Dorsolateral prefrontal cortex (tissue), 120 donors: ENCODE measurements at regions of chr14 and their contacts with region 1.

Region 1: DNA sequence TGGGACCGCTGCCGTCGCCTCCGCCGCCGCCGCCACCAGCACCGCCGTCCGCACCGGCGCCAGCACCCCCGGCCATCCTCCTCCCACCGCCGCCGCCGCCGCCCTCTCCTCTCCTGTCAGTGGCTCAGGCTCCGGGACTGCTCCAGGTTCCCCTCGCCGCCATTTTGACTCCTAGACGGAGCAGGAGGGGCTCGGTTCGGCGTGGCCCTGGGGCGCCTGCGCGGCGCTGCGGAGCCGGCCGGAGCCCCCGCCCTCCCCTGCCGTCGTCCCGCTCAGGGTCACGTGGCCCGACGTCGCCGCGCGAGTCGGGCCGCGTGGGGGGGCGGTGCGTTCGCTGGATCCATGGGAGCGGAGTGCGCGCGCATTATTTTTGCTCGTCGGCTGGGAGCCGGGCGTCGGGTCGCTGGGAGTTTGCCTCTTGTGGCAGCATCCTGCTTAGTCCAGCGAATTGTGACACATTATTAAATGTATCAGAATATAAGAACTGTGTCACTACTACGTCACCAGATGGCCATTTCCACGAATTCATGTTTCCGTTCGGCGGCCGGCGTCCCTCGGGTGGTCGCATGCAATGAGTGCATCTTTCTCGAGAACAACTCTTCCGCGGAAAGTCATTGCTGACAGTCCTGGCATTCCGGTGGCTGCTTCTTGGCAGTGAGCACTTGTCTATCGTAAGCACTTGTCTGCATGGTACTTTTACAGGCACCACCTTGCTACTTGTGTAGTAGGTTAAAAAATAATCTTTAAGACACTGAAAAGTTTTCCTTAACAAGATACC is at the start of gene BTBD7:
- DNase-seq: peak; percentile 82 to 96 (median 90)
- H3K4me3 ChIP-seq: peak within 1 kb of the TSS; percentile 59 to 100 (median 85)
- H3K27ac ChIP-seq: peak within 1 kb of the TSS; percentile 72 to 99 (median 94)
- H3K27me3 ChIP-seq: no peaks in the 10 kb centered on the region
- CTCF ChIP-seq: peak in 37 of 56 donors; percentile 5 to 58 (median 36)
- total RNA-seq, gene BTBD7: 33.5 to 75.5 (median 46.4) TPM

Region 2: DNA sequence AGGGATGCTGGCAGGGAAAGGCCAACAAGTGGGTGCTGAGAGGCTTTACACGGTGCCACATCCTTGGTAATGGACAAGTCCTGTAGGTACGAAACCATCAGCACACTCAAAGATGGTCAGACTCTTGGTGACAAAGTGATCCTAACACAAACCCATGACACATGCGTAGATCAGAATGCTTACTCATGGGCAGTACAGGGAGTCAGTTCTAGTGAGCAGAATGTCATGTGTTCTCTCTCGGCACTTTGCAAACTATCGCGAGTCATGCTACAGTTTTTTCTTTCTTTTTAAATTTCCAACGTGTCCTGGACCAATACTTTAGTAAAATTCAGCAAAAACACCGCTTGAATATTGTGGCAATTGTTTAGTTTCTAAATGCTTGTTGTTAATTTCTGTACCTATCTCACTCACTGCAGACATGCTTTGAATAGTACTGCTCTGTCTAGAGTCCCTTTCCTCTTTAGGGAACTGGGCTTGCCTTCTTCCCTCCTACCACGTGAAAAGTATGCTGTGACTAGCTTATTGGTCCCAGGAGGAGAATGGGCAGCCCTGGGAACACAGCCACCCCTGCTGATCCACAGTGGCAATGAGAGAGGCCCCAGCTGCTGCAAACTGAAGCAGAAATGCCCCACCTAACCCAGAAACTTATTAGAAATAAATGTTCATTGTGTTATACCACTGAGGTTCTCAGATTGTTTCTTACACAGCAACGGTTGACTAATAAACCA is 63.5 kb before region 1 on chr14:
- intact Hi-C with region 1: loop called in 1 of 2 experiments (anchors 5 kb)
- DNase-seq: peak in 9 of 10 donors; percentile 44 to 79 (median 65)
- H3K4me3 ChIP-seq: peak overlapping the region in 52 of 59 donors; percentile 0 to 60 (median 32)
- H3K27ac ChIP-seq: peak overlapping the region in 58 of 59 donors; percentile 20 to 93 (median 76)
- H3K27me3 ChIP-seq: no peaks in the 10 kb centered on the region
- CTCF ChIP-seq: peak in 10 of 56 donors; percentile 12 to 33 (median 17)

Region 3: DNA sequence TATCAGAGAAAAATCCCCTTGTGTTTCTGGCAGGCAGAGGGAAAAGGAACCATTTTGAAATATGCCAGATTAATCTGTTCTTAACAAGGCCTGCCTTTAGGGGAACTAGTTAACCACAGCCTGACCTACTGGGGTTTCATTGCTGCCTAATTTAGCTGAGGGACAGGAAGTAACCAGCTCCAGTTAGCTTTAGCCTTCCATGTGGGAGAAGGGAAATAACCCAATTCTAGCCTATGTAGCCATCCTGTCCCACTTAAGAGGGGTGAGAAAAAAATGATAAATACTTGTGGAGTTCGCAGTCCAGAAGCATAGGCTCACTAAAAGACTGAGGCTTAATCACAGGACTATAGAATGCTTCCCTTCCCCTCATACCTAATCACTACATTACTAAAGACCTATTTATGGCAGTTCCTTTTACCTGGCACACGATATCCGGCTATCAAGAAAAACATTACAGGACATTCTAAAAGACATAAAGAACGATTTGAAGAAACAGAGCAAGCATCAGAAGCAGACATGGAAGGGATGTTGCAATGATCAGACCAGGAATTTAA is 36.7 kb after region 1 on chr14:
- intact Hi-C with region 1: no loop called
- DNase-seq: no peak
- H3K4me3 ChIP-seq: no peak overlapping the region
- H3K27ac ChIP-seq: no peak overlapping the region
- H3K27me3 ChIP-seq: no peaks in the 10 kb centered on the region
- CTCF ChIP-seq: no peak

Region 4: DNA sequence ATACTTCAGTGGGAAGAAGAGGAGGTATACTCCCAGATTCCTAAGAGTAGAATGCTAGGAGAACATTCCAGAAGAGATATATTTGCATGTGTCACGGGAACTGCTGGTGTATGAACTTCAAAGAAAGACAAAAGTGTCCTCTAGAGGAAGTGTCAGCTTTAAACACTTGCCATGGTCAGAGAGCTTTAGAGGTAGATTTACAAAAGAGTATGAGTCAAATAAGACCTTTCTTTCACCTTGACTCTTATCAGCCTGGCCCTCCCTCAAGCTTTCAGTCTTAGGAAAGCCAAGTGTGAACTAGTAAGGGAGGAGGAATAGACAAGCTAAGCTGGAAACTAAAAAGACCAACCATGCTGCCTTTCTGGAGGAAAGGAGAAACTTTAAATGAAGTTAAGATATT is 48.6 kb after region 1 on chr14:
- intact Hi-C with region 1: loop called (anchors 1 to 5 kb)
- DNase-seq: no peak
- H3K4me3 ChIP-seq: no peak overlapping the region
- H3K27ac ChIP-seq: peak overlapping the region in 2 of 59 donors; percentile 16 to 17
- H3K27me3 ChIP-seq: no peaks in the 10 kb centered on the region
- CTCF ChIP-seq: no peak

Region 5: GRCh38 chr14:93431036-93431670 is 98.1 kb after region 1 on chr14:
- intact Hi-C with region 1: loop called (anchors 2 kb)
- DNase-seq: peak; percentile 56 to 89 (median 81)
- H3K4me3 ChIP-seq: peak overlapping the region; percentile 46 to 82 (median 66)
- H3K27ac ChIP-seq: peak overlapping the region in 53 of 59 donors; percentile 38 to 89 (median 73)
- H3K27me3 ChIP-seq: no peaks in the 10 kb centered on the region
- CTCF ChIP-seq: no peak

Region 6: DNA sequence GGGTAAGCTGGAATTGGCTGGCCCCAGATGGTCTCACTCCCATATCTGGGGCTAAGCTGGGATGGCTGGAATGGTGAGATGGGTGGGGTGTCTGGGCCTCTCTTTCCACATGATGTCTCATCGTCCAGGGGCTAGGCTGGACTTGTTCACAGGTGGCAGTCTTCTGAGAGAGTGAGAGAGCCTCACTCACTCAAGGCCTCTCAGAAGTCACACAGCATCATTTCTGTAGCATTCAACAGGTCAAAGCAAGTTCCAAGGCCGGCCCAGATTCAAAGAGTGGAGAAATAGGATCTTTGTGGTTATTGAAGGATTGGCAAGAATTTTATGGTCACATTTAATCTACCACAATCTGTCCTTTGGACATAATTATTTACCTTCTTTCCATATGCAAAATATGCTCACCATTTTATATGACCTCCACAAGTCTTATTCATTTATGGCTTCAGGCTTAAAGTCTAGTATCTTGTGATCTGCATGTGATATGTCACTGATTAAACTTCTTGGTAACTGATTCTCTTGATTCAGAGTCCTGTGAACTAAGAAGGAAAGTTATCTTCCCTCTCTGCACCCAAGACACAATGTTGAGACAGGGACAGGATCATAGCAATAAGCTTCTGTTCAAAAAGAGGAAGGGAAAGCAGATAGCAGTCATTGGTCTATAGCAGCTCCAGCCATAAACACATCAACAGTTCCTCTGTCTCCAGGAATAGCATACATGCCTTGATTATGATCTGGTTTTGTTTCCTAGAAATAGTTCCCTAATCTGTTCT is 200.6 kb after region 1 on chr14:
- intact Hi-C with region 1: loop called (anchors 5 to 10 kb)
- DNase-seq: no peak
- H3K4me3 ChIP-seq: no peak overlapping the region
- H3K27ac ChIP-seq: peak overlapping the region in 1 of 59 donors; percentile 1
- H3K27me3 ChIP-seq: no peaks in the 10 kb centered on the region
- CTCF ChIP-seq: no peak